HepG2 (cell line): ENCODE measurements at regions of chrX and their contacts with region 1.

Region 1: GRCh38 chrX:115204040-115204439 is 14.8 kb downstream of the RBMXL3 start:
- DNase-seq: no peak
- ATAC-seq: no peak
- H3K4me3 ChIP-seq: no peak overlapping the region
- H3K27ac ChIP-seq: no peak overlapping the region
- H3K4me1 ChIP-seq: no peaks in the 10 kb centered on the region
- H3K27me3 ChIP-seq: no peaks in the 10 kb centered on the region
- CTCF ChIP-seq: no peak
- EP300 ChIP-seq: no peak
- POLR2A ChIP-seq: no peak
- RAD21 ChIP-seq: no peak

Region 2: DNA sequence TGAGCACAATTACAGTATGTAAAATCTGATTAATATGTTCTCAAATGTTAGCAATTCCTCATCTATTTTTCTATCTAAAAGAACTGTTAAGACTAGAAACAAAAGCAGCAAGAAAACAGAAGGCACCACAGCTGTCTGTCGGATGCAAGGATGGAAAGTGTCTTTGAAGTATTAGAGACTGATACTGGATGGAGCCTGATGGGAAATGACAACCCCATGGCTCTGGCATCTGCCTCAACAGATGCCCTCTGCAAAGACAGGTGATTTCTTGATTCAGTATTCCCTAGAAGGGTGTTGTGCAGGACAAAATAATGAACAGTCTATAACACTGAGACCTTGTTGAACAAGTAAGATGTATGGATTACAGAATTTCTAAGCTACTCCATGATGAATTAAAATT is 10.1 kb after region 1 on chrX:
- CTCF ChIA-PET with region 1: no interaction called
- POLR2A ChIA-PET with region 1: no interaction called
- in situ Hi-C with region 1: no loop called
- intact Hi-C with region 1: loop called (anchors 1 kb)
- DNase-seq: no peak
- ATAC-seq: no peak
- H3K4me3 ChIP-seq: no peak overlapping the region
- H3K27ac ChIP-seq: no peak overlapping the region
- H3K4me1 ChIP-seq: 0 out of 2 replicates have a peak, but pooled peaks cover 5% of the 10 kb centered on the region
- H3K27me3 ChIP-seq: no peaks in the 10 kb centered on the region
- CTCF ChIP-seq: no peak
- EP300 ChIP-seq: no peak
- POLR2A ChIP-seq: no peak
- RAD21 ChIP-seq: no peak

Region 3: DNA sequence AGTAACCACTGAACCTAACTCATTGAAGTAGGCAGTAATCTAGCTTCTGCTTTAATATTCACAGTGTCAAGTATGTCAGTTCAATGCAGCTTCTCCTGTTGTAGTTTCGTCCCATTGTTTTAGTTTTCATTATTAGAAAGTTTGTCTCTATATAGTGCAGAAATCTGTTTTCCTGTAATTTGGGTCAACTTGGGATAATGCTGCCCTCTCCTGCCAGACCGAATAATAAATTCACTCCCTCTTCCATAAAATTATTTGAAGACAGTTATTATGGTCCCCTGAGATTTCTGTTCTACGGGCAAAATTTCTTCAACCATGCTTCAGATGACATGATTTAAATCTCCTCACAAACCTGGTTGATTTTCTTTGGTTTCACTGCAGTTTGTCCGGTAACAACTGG is 80.8 kb after region 1 on chrX:
- CTCF ChIA-PET with region 1: no interaction called
- POLR2A ChIA-PET with region 1: no interaction called
- in situ Hi-C with region 1: no loop called
- intact Hi-C with region 1: no loop called
- DNase-seq: no peak
- ATAC-seq: no peak
- H3K4me3 ChIP-seq: no peak overlapping the region
- H3K27ac ChIP-seq: no peak overlapping the region
- H3K4me1 ChIP-seq: no peaks in the 10 kb centered on the region
- H3K27me3 ChIP-seq: no peaks in the 10 kb centered on the region; a peak in 1 of 5 replicates
- CTCF ChIP-seq: no peak
- EP300 ChIP-seq: no peak
- POLR2A ChIP-seq: no peak
- RAD21 ChIP-seq: no peak

Region 4: GRCh38 chrX:115322375-115322774 is 118.3 kb after region 1 on chrX:
- CTCF ChIA-PET with region 1: no interaction called
- POLR2A ChIA-PET with region 1: no interaction called
- in situ Hi-C with region 1: no loop called
- intact Hi-C with region 1: no loop called
- DNase-seq: no peak
- ATAC-seq: no peak
- H3K4me3 ChIP-seq: no peak overlapping the region
- H3K27ac ChIP-seq: no peak overlapping the region
- H3K4me1 ChIP-seq: no peaks in the 10 kb centered on the region
- H3K27me3 ChIP-seq: no peaks in the 10 kb centered on the region
- CTCF ChIP-seq: no peak
- EP300 ChIP-seq: no peak
- POLR2A ChIP-seq: no peak
- RAD21 ChIP-seq: no peak